GM12878 (cell line): ENCODE measurements at regions of chr4 and their contacts with region 1.

Region 1: DNA sequence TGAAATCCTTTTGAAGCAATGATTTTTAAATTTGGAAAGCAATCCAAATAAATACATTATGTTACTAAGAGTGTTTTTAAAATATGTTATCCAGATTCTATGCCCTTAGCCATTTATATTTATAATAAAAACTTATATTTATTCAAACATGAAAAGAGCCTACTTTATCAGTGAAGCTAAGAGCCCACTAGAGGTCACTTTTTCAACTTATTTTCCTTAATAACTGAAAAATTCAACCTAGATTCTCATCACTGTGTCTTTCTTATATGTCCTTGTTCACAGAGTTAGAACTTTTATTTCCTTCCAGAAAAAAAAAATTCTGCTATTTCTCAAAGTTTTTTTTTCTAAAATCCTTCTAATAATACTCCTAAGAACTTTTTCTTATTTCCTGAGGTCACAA is 23.9 kb downstream of the PRDM8 start:
- DNase-seq: no peak
- ATAC-seq: peak; percentile 55
- H3K4me3 ChIP-seq: no peak overlapping the region
- H3K27ac ChIP-seq: no peak overlapping the region
- H3K4me1 ChIP-seq: no peaks in the 10 kb centered on the region
- H3K27me3 ChIP-seq: peaks cover 0 to 8% of the 10 kb centered on the region in 2 experiments; a peak in 2 of 4 replicates
- CTCF ChIP-seq: peak in 2 of 3 experiments; percentile 14 to 25; a peak in 4 of 6 replicates
- EP300 ChIP-seq: no peak
- POLR2A ChIP-seq: no peak
- RAD21 ChIP-seq: peak; percentile 52

Region 2: GRCh38 chr4:80266253-80266901 is 45.2 kb after region 1 on chr4 and contains the start of gene FGF5:
- CTCF ChIA-PET with region 1: interaction called, 19 read pairs
- POLR2A ChIA-PET with region 1: no interaction called
- RAD21 ChIA-PET with region 1: interaction called, 5 read pairs
- SMC1A ChIA-PET with region 1: interaction called, 6 read pairs
- in situ Hi-C with region 1: no loop called
- intact Hi-C with region 1: loop called (anchors 5 kb)
- DNase-seq: no peak
- ATAC-seq: peak; percentile 77
- H3K4me3 ChIP-seq: peak within 1 kb of the TSS; percentile 36; the same call in 1 of the 2 replicates
- H3K27ac ChIP-seq: no peak within 1 kb of the TSS
- H3K4me1 ChIP-seq: no peaks in the 10 kb centered on the region
- H3K27me3 ChIP-seq: peaks cover 11 to 36% of the 10 kb centered on the region in 2 experiments
- CTCF ChIP-seq: no peak
- EP300 ChIP-seq: no peak
- POLR2A ChIP-seq: no peak
- RAD21 ChIP-seq: no peak
- polyA plus RNA-seq, gene FGF5: 1.1 to 1.7 TPM

Region 3: DNA sequence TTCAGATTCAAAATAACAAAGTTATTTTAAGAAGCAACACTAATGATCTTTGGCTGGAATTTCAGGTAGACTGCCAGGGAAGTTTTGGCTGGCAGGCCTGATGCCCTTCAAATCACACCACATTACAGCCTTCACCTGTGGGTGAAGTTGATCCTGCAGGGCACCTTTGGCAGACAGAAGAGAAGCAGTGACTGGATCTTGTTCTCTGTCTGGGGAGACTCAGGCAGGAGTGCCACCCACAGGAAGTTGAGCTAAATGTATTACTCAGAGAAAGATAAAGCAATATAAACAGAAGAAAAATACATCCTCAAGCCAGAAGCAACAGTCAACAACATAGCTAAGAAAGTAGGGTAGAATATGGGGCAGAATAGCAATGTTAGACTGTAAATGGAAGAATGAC is 101.6 kb after region 1 on chr4:
- CTCF ChIA-PET with region 1: interaction called, 48 read pairs
- POLR2A ChIA-PET with region 1: interaction called, 3 read pairs
- RAD21 ChIA-PET with region 1: interaction called, 27 read pairs
- SMC1A ChIA-PET with region 1: interaction called, 36 read pairs
- in situ Hi-C with region 1: no loop called
- intact Hi-C with region 1: no loop called
- DNase-seq: no peak
- ATAC-seq: peak; percentile 76
- H3K4me3 ChIP-seq: no peak overlapping the region
- H3K27ac ChIP-seq: no peak overlapping the region
- H3K4me1 ChIP-seq: no peaks in the 10 kb centered on the region
- H3K27me3 ChIP-seq: no peaks in the 10 kb centered on the region
- CTCF ChIP-seq: peak in 2 of 3 experiments; percentile 15 to 47; a peak in 1 of 6 replicates
- EP300 ChIP-seq: no peak
- POLR2A ChIP-seq: no peak
- RAD21 ChIP-seq: peak; percentile 48; the same call in 1 of the 2 replicates

Region 4: GRCh38 chr4:80335554-80336358 is 114.6 kb after region 1 on chr4 and contains the start of gene CFAP299:
- CTCF ChIA-PET with region 1: interaction called, 36 read pairs
- POLR2A ChIA-PET with region 1: no interaction called
- RAD21 ChIA-PET with region 1: interaction called, 23 read pairs
- SMC1A ChIA-PET with region 1: interaction called, 13 read pairs
- in situ Hi-C with region 1: no loop called
- intact Hi-C with region 1: loop called (anchors 2 kb)
- DNase-seq: peak; percentile 44
- ATAC-seq: peak; percentile 97
- H3K4me3 ChIP-seq: peak within 1 kb of the TSS; percentile 61
- H3K27ac ChIP-seq: no peak within 1 kb of the TSS
- H3K4me1 ChIP-seq: no peaks in the 10 kb centered on the region; the same call in 1 of the 2 replicates
- H3K27me3 ChIP-seq: peaks cover 0 to 8% of the 10 kb centered on the region in 2 experiments; a peak in 3 of 4 replicates
- CTCF ChIP-seq: peak in 2 of 3 experiments; percentile 29 to 36; a peak in 2 of 6 replicates
- EP300 ChIP-seq: no peak
- POLR2A ChIP-seq: no peak
- RAD21 ChIP-seq: no peak
- polyA plus RNA-seq, gene CFAP299: not detected